HepG2 (cell line): ENCODE measurements at regions of chr10 and their contacts with region 1.

Region 1: DNA sequence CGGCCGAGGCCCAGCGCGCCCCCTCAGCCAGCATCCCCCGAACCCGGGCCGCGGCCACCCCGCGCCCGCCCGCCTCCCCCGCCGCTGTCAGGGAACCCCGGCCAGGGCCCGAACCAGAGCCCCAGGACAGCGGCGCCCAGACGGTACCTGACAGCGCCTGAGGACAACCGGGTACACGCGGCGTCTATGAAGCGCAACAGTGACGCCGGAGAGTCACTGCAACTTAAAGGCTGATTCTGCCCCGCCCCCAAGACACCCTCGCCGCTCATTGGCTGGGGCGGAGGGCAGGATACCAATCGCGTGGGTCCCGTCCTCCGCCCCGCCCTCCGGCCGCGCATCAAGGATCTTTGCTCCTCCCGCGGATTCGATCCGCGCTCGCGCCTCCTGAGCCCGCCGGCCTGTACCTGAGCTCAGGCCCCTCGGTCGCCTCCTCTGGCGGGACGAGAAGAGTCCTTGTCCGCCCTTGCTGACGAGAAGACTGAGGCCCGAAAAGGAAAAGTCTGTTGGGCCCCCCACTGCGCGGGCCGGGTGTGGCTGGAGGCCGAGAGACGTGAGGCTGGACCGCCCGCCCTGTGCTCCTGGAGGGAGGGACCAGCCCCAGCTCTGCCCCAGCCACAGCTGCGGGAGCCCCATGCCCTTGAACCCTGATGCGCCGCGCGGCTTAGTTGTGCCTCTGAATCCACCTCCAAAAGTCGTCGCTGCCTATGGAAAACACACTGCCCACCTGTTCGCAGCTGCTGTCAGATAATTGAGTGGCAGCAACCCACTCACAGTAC is at the start of gene OAT:
- DNase-seq: peak; percentile 93
- ATAC-seq: peak; percentile 94
- H3K4me3 ChIP-seq: peak within 1 kb of the TSS; percentile 79 to 81 (median 79)
- H3K27ac ChIP-seq: peak within 1 kb of the TSS; percentile 48
- H3K4me1 ChIP-seq: peaks cover 49% of the 10 kb centered on the region
- H3K27me3 ChIP-seq: peaks cover 0 to 25% of the 10 kb centered on the region in 2 experiments; a peak in 3 of 5 replicates
- CTCF ChIP-seq: peak; percentile 48
- EP300 ChIP-seq: peak in 1 of 2 experiments; percentile 26; a peak in 2 of 4 replicates
- POLR2A ChIP-seq: peak; percentile 98 to 100
- RAD21 ChIP-seq: peak; percentile 10; the same call in 1 of the 2 replicates
- total RNA-seq, gene OAT: 96.7 and 152 TPM in 2 replicates

Region 2: DNA sequence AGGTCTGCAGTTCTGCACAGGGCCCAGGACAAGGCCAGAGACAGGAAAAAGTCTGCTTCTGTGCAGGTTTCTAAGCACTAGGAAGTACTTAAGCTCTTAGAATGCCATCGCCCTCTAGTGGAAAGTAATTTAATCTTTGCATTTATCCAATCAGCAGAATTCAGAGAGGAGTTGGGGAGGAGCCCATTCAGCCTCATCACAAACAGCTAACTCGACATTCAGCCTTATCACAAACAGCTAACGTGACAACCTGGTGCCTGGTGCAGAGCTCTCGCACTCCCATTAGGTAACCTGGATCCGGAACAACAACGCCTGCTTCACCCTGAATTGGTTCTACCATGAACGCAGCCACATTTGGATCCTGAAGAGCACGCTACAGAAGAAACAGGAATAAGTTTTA is 15.4 kb before region 1 on chr10:
- CTCF ChIA-PET with region 1: no interaction called
- POLR2A ChIA-PET with region 1: interaction called, 12 read pairs
- in situ Hi-C with region 1: no loop called
- intact Hi-C with region 1: no loop called
- DNase-seq: peak; percentile 78
- ATAC-seq: peak; percentile 95
- H3K4me3 ChIP-seq: no peak overlapping the region
- H3K27ac ChIP-seq: no peak overlapping the region
- H3K4me1 ChIP-seq: no peaks in the 10 kb centered on the region
- H3K27me3 ChIP-seq: no peaks in the 10 kb centered on the region
- CTCF ChIP-seq: peak; percentile 68
- EP300 ChIP-seq: no peak
- POLR2A ChIP-seq: no peak
- RAD21 ChIP-seq: peak; percentile 39; the same call in 1 of the 2 replicates

Region 3: DNA sequence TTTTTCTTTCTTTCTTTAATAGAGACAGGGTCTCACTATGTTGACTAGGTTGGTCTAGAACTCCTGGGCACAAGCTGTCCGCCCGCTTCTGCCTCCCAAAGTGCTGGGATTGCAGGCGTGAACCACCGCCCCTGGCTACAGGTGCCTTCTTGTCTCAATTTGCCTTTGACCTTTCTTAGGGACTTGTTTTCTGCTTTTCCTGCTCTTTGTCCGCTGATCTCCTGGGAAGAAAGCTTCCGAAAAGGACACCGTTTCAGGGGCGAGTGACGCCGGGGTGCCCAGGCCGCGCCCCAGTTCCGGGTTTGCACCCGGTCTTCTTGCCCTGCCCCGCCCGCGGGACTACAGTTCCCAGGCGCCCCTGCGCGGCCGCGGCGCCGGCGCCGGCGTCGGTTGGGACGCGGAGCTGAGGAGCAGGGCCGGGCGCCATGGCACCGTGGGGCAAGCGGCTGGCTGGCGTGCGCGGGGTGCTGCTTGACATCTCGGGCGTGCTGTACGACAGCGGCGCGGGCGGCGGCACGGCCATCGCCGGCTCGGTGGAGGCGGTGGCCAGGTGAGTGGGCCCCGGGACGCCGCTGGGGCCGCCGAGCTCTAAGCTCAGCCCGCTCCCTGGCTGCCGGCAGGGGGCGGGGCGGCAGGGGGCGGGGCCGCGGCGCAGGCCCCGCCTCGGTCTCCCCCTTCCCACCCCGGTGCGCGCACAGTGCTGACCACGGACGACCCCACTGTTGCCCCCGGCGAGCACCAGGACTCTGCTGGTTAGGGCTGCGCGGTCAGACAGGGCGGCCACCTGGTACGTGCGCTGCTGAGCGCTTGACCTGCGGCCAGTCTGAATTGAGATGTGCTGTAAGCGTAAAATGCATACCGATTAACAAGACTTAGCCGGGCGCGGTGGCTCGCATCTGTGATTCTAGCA is 42.8 kb after region 1 on chr10 and contains the start of gene LHPP:
- CTCF ChIA-PET with region 1: no interaction called
- POLR2A ChIA-PET with region 1: interaction called, 27 read pairs
- in situ Hi-C with region 1: loop called (anchors 5 kb)
- intact Hi-C with region 1: no loop called
- DNase-seq: peak; percentile 54
- ATAC-seq: peak; percentile 95
- H3K4me3 ChIP-seq: peak within 1 kb of the TSS; percentile 81 to 97 (median 89)
- H3K27ac ChIP-seq: peak within 1 kb of the TSS; percentile 76
- H3K4me1 ChIP-seq: peaks cover 49% of the 10 kb centered on the region
- H3K27me3 ChIP-seq: no peaks in the 10 kb centered on the region; a peak in 1 of 5 replicates
- CTCF ChIP-seq: peak; percentile 26; the same call in 1 of the 2 replicates
- EP300 ChIP-seq: no peak
- POLR2A ChIP-seq: peak in 1 of 2 experiments; percentile 79; a peak in 2 of 4 replicates
- RAD21 ChIP-seq: peak; percentile 39
- total RNA-seq, gene LHPP: 3.7 and 5.2 TPM in 2 replicates

Region 4: DNA sequence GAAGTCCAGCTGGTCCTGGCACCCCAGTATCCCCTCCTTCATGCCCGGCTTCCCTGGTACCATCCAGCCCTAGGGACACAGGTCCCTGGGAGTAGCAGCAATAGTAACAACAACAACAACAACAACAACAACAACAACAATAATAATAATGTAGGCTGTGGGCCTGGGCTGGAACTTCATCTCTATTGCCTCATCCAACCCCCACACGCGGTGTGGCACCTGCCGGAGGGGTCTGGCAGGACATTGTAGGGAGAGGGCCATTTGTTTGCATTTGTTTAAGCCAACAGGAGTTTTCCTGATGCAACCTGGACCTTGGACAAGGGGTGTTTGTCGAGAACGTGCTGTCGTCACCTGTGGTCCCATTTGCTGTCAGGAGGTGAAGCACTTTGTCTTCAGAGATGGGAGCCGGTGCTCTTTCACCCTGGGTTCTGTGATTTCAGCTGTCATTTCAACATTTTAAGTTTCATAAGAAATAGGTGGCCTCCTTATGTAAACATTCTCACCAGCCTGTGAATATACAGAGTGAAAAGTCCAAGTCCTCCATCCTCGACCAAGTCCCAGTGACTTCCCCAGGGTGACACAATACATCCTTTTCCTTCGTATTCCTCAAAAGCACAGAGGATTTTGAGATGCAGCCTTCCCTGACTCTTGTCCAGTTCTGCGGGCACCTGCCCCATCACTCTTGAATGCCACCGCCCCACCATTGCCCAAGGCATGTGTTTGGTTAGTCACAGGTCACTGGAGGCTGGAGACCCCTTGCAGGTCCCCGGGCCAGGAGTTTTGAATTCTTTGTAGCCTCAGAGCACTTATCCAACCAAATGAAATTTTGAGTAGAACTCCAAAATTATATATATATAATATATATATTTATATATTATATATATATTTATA is 51.9 kb after region 1 on chr10:
- CTCF ChIA-PET with region 1: no interaction called
- POLR2A ChIA-PET with region 1: interaction called, 11 read pairs
- in situ Hi-C with region 1: no loop called
- intact Hi-C with region 1: loop called (anchors 2 kb)
- DNase-seq: peak; percentile 98
- ATAC-seq: peak; percentile 82
- H3K4me3 ChIP-seq: peak overlapping the region in 2 of 3 experiments; percentile 18 to 50; a peak in 2 of 6 replicates
- H3K27ac ChIP-seq: peak overlapping the region; percentile 77
- H3K4me1 ChIP-seq: peaks cover 93% of the 10 kb centered on the region
- H3K27me3 ChIP-seq: no peaks in the 10 kb centered on the region
- CTCF ChIP-seq: peak; percentile 59
- EP300 ChIP-seq: peak; percentile 92 to 94
- POLR2A ChIP-seq: no peak
- RAD21 ChIP-seq: no peak

Region 5: GRCh38 chr10:124557648-124558600 is 139.0 kb after region 1 on chr10:
- CTCF ChIA-PET with region 1: no interaction called
- POLR2A ChIA-PET with region 1: no interaction called
- in situ Hi-C with region 1: no loop called
- intact Hi-C with region 1: no loop called
- DNase-seq: no peak
- ATAC-seq: no peak
- H3K4me3 ChIP-seq: no peak overlapping the region
- H3K27ac ChIP-seq: no peak overlapping the region
- H3K4me1 ChIP-seq: peaks cover 22% of the 10 kb centered on the region
- H3K27me3 ChIP-seq: no peaks in the 10 kb centered on the region
- CTCF ChIP-seq: no peak
- EP300 ChIP-seq: no peak
- POLR2A ChIP-seq: no peak
- RAD21 ChIP-seq: no peak

Region 6: DNA sequence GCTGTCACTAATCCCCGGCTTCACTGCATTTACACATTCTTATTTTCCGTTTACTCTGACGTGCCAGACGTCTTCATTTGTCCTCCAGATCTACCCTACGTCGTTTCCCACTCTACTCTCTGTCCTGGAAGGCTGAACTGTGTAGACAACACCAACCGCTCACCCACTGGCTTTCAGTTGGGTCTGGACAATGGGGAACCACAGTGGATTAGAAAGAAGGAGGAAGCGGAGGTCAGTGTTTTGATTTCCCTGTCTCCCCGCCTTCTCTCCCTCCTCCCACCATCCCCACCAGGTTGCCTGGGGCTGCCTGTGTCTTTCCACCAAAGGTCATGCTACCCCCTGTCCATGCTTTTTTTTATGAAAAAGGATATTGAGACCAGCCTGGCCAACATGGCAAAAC is 755.4 kb after region 1 on chr10:
- CTCF ChIA-PET with region 1: no interaction called
- POLR2A ChIA-PET with region 1: no interaction called
- in situ Hi-C with region 1: no loop called
- intact Hi-C with region 1: no loop called
- DNase-seq: no peak
- ATAC-seq: no peak
- H3K4me3 ChIP-seq: no peak overlapping the region
- H3K27ac ChIP-seq: no peak overlapping the region
- H3K4me1 ChIP-seq: no peaks in the 10 kb centered on the region
- H3K27me3 ChIP-seq: peaks cover 4 to 20% of the 10 kb centered on the region in 2 experiments; a peak in 3 of 5 replicates
- CTCF ChIP-seq: no peak
- EP300 ChIP-seq: no peak
- POLR2A ChIP-seq: no peak
- RAD21 ChIP-seq: no peak